Natural killer cell (primary cell): ENCODE measurements at regions of chr18 and their contacts with region 1.

Region 1: GRCh38 chr18:62186774-62187542 is at the starts of genes PIGN and RELCH:
- DNase-seq: peak; percentile 85 to 98
- ATAC-seq: peak; percentile 90 to 99 (median 94)
- H3K4me3 ChIP-seq: peak within 1 kb of the TSS; percentile 95
- H3K4me3 Mint-ChIP-seq: peak within 1 kb of the TSS; percentile 100
- H3K27ac ChIP-seq: peak within 1 kb of the TSS; percentile 74
- H3K27ac Mint-ChIP-seq: peak within 1 kb of the TSS; percentile 96 to 98
- H3K4me1 ChIP-seq: peaks cover 20% of the 10 kb centered on the region
- H3K4me1 Mint-ChIP-seq: peaks cover 60 to 61% of the 10 kb centered on the region in 2 donors
- H3K27me3 ChIP-seq: no peaks in the 10 kb centered on the region
- H3K27me3 Mint-ChIP-seq: no peaks in the 10 kb centered on the region
- CTCF ChIP-seq: no peak
- total RNA-seq, gene PIGN: 12.2 to 21.7 (median 20.1) TPM
- total RNA-seq, gene RELCH: 60.1 to 69.9 (median 63.9) TPM

Region 2: GRCh38 chr18:62066102-62066818 is 120.7 kb before region 1 on chr18:
- intact Hi-C with region 1: no loop called
- DNase-seq: no peak
- ATAC-seq: peak in 1 of 3 donors; percentile 35
- H3K4me3 ChIP-seq: no peak overlapping the region
- H3K4me3 Mint-ChIP-seq: no peak overlapping the region
- H3K27ac ChIP-seq: no peak overlapping the region
- H3K27ac Mint-ChIP-seq: no peak overlapping the region
- H3K4me1 ChIP-seq: no peaks in the 10 kb centered on the region
- H3K4me1 Mint-ChIP-seq: no peaks in the 10 kb centered on the region
- H3K27me3 ChIP-seq: no peaks in the 10 kb centered on the region
- H3K27me3 Mint-ChIP-seq: no peaks in the 10 kb centered on the region
- CTCF ChIP-seq: no peak

Region 3: GRCh38 chr18:62249478-62250097 is 62.6 kb after region 1 on chr18:
- intact Hi-C with region 1: loop called (anchors 1 kb)
- DNase-seq: peak; percentile 36 to 85
- ATAC-seq: peak in 2 of 3 donors; percentile 64 to 75
- H3K4me3 ChIP-seq: no peak overlapping the region
- H3K4me3 Mint-ChIP-seq: no peak overlapping the region
- H3K27ac ChIP-seq: no peak overlapping the region
- H3K27ac Mint-ChIP-seq: no peak overlapping the region
- H3K4me1 ChIP-seq: no peaks in the 10 kb centered on the region
- H3K4me1 Mint-ChIP-seq: no peaks in the 10 kb centered on the region
- H3K27me3 ChIP-seq: no peaks in the 10 kb centered on the region
- H3K27me3 Mint-ChIP-seq: no peaks in the 10 kb centered on the region
- CTCF ChIP-seq: peak; percentile 91

Region 4: DNA sequence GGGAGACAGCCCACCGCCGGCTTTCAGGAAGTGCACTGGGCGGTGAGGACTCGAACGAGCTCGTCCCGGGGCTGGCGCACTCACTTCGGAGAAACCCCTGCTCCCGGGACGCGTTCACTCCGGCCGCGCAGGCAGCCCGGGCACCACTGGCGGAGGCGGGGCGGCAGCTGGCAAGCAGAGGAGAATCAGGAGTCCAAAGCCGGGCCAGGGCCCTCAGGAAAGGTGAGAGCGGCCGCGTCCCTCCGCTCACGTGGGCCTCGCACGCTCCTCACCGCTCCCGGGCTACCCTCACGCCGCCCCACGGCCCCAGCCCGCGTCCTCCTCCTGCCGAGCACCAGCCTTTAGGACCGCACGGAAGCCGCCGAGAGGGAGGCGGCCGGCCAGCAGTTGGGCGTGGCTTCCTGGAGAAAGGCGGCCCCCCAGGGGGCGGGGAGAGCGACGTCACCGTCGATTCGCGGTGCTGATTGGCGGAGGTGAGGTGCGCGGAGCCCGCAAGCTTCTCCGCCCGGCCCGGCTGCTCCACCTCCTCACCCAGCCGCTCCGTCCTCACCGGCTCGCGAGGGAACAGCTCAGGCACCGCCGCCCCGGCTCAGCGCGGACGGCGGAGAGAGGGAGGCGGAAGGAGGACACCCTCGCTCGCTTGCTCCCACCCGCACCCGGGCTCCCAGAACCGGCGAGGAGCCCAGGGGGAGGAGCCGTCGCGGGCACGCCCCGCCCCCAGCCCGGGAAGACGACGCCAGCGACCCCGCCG is 335.7 kb after region 1 on chr18 and contains the start of gene ZCCHC2:
- intact Hi-C with region 1: loop called (anchors 2 kb)
- DNase-seq: peak; percentile 99
- ATAC-seq: peak; percentile 78 to 91 (median 81)
- H3K4me3 ChIP-seq: peak within 1 kb of the TSS; percentile 82
- H3K4me3 Mint-ChIP-seq: peak within 1 kb of the TSS; percentile 91
- H3K27ac ChIP-seq: peak within 1 kb of the TSS; percentile 91
- H3K27ac Mint-ChIP-seq: peak within 1 kb of the TSS; percentile 89 to 93
- H3K4me1 ChIP-seq: peaks cover 16% of the 10 kb centered on the region
- H3K4me1 Mint-ChIP-seq: peaks cover 23 to 28% of the 10 kb centered on the region in 2 donors
- H3K27me3 ChIP-seq: no peaks in the 10 kb centered on the region
- H3K27me3 Mint-ChIP-seq: peaks cover 0 to 7% of the 10 kb centered on the region in 2 donors
- CTCF ChIP-seq: no peak
- total RNA-seq, gene ZCCHC2: 50.4 to 81.2 (median 59.6) TPM